ENCODE measurements at regions of chr22 and their contacts with region 1.

Region 1: GRCh38 chr22:26797910-26798309 is 140.5 kb downstream of the MIAT start:
- DNase-seq: no peak
- H3K4me3 ChIP-seq: no peak overlapping the region
- H3K27ac ChIP-seq: no peak overlapping the region
- H3K4me1 ChIP-seq: peaks cover 0 to 5% (median 0%) of the 10 kb centered on the region in 4 donors
- H3K27me3 ChIP-seq: no peaks in the 10 kb centered on the region
- CTCF ChIP-seq: no peak
- EP300 ChIP-seq: no peak
- POLR2A ChIP-seq: no peak

Region 2: GRCh38 chr22:26748845-26749244 is 49.1 kb before region 1 on chr22:
- in situ Hi-C with region 1: no loop called
- intact Hi-C with region 1: loop called (anchors 1 kb)
- DNase-seq: no peak
- H3K4me3 ChIP-seq: no peak overlapping the region
- H3K27ac ChIP-seq: no peak overlapping the region
- H3K4me1 ChIP-seq: peaks cover 0 to 4% (median 0%) of the 10 kb centered on the region in 4 donors
- H3K27me3 ChIP-seq: no peaks in the 10 kb centered on the region
- CTCF ChIP-seq: no peak
- EP300 ChIP-seq: no peak
- POLR2A ChIP-seq: no peak